ENCODE measurements at regions of chr18 and their contacts with region 1.

Region 1: GRCh38 chr18:48680339-48681221 is 141.7 kb downstream of the CTIF start:
- DNase-seq: peak; percentile 74
- H3K4me3 ChIP-seq: no peak overlapping the region
- H3K27ac ChIP-seq: peak overlapping the region; percentile 41 to 62
- H3K4me1 ChIP-seq: peaks cover 17% of the 10 kb centered on the region
- H3K27me3 ChIP-seq: no peaks in the 10 kb centered on the region
- CTCF ChIP-seq: no peak
- POLR2A ChIP-seq: no peak

Region 2: DNA sequence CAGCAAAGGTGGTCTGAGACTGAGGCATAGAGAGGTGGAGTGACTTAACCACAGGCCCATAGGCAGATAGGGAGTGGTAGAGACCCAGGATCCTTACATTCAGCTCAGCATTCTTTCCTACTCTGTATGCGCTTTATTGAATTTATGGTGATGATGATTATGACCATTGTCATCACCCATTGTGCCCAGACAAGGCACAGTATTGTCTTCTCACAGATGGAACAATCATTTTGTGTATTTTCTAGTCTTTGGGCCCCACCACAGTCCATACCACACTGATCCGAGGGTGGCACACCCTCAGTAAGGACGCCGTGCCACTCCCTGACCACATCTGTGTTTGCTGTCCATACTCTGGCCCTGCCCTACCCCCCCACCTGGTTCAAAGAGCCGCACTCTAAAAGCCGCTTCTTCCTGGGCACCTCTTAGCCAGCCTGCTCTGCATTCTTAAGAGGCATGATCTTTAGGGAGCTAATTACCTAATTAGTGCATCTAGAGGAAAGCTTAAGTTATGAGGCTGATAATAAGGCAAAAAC is 570.6 kb before region 1 on chr18:
- intact Hi-C with region 1: no loop called
- DNase-seq: no peak
- H3K4me3 ChIP-seq: no peak overlapping the region
- H3K27ac ChIP-seq: no peak overlapping the region
- H3K4me1 ChIP-seq: no peaks in the 10 kb centered on the region
- H3K27me3 ChIP-seq: no peaks in the 10 kb centered on the region
- CTCF ChIP-seq: no peak
- POLR2A ChIP-seq: no peak

Region 3: DNA sequence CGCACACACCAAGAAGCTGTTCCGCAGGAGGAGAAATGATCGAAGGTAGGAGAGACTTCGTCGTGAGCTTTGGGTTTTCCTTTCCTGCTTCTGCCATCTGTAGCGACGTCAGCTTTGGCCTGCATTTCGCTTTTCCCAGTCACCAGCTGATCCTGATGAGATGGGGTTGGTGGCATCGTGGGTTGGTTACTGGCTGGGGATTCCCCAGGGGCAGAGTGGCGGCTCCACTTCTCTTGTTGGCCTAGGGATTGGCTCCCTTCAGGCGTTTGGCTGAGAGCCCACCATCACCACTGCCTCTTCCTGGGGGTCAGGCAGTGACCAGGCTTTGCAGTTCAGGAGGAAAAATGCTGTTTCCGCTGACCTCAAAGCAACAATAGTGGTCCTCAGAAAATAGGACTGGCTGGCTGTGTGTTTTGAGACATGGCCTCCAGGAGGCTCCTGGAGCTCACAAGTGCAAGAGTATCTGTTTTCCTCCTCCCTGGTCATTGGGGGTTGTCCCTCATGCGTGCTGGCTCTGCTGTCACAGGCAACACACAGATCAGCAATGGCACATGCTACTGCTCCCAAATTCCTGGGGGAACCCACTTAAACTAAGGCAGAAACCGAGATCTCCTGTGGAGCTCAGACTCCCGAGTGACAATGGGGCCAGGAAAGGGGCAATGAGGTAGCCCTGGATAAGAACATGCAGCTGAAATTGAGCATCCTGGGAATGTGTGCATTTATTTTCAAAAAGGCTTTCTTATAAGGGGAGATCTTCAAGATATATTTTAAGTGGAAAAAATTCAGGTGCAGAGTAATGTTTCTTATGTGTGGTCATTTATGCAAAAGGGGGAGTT is 31.3 kb after region 1 on chr18:
- intact Hi-C with region 1: no loop called
- DNase-seq: no peak
- H3K4me3 ChIP-seq: no peak overlapping the region
- H3K27ac ChIP-seq: no peak overlapping the region
- H3K4me1 ChIP-seq: peaks cover 18% of the 10 kb centered on the region
- H3K27me3 ChIP-seq: no peaks in the 10 kb centered on the region
- CTCF ChIP-seq: no peak
- POLR2A ChIP-seq: no peak

Region 4: DNA sequence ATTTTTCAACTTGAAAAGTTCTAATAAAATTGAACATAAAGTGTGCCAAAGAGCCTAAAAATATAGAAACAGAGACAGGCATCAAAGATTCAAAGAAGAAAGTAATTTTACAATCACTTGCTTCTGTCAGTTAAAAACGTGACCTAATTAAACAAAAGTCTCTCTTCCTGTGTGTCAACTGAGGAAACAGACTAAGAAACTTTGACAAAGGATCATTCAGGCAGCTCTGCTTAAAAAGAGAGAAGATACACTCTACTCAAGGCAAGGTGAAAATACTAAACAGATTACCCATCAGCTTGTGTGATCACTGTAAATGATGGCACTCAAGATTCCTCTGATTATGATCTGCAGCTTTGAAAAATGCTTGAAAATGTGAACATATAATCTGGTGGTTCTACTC is 732.1 kb after region 1 on chr18:
- intact Hi-C with region 1: loop called (anchors 10 kb)
- DNase-seq: no peak
- H3K4me3 ChIP-seq: no peak overlapping the region
- H3K27ac ChIP-seq: no peak overlapping the region
- H3K4me1 ChIP-seq: no peaks in the 10 kb centered on the region
- H3K27me3 ChIP-seq: no peaks in the 10 kb centered on the region
- CTCF ChIP-seq: no peak
- POLR2A ChIP-seq: no peak